ENCODE measurements at regions of chr2 and their contacts with region 1.

Region 1: GRCh38 chr2:29146197-29146596 is 31.0 kb downstream of the CLIP4 start:
- DNase-seq: no peak
- H3K4me3 ChIP-seq: no peak overlapping the region
- H3K27ac ChIP-seq: no peak overlapping the region
- H3K4me1 ChIP-seq: no peaks in the 10 kb centered on the region
- H3K27me3 ChIP-seq: no peaks in the 10 kb centered on the region
- CTCF ChIP-seq: no peak
- POLR2A ChIP-seq: no peak

Region 2: DNA sequence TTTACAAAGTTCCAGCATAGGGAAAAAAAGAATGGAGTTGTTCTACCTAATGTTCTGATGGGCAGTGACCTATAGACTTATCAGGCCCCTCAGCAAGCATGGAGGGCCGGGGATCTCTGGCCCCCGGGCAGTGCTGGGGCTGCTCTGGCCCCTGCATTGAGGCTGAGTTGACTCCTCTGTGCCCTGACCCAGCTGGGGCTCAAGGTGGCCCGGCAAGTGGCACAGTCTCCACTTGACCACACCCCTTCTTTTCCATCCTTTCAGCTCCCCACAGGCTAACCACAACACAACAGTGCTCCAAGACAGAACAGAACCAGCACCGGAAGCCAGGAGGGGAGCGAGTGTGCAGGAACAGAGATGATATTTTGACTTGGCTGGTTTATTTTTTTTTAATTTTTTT is 145.2 kb before region 1 on chr2:
- intact Hi-C with region 1: no loop called
- DNase-seq: no peak
- H3K4me3 ChIP-seq: no peak overlapping the region
- H3K27ac ChIP-seq: no peak overlapping the region
- H3K4me1 ChIP-seq: peaks cover 4% of the 10 kb centered on the region
- H3K27me3 ChIP-seq: no peaks in the 10 kb centered on the region
- CTCF ChIP-seq: no peak
- POLR2A ChIP-seq: no peak

Region 3: GRCh38 chr2:29042561-29043075 is 103.6 kb before region 1 on chr2:
- intact Hi-C with region 1: no loop called
- DNase-seq: no peak
- H3K4me3 ChIP-seq: no peak overlapping the region
- H3K27ac ChIP-seq: no peak overlapping the region
- H3K4me1 ChIP-seq: no peaks in the 10 kb centered on the region
- H3K27me3 ChIP-seq: no peaks in the 10 kb centered on the region
- CTCF ChIP-seq: no peak
- POLR2A ChIP-seq: no peak

Region 4: GRCh38 chr2:29123617-29124349 is 22.4 kb before region 1 on chr2:
- intact Hi-C with region 1: loop called (anchors 1 kb)
- DNase-seq: no peak
- H3K4me3 ChIP-seq: no peak overlapping the region
- H3K27ac ChIP-seq: peak overlapping the region; percentile 44
- H3K4me1 ChIP-seq: peaks cover 21% of the 10 kb centered on the region
- H3K27me3 ChIP-seq: no peaks in the 10 kb centered on the region
- CTCF ChIP-seq: no peak
- POLR2A ChIP-seq: no peak